RWPE1 (cell line): ENCODE measurements at regions of chr13 and their contacts with region 1.

Region 1: DNA sequence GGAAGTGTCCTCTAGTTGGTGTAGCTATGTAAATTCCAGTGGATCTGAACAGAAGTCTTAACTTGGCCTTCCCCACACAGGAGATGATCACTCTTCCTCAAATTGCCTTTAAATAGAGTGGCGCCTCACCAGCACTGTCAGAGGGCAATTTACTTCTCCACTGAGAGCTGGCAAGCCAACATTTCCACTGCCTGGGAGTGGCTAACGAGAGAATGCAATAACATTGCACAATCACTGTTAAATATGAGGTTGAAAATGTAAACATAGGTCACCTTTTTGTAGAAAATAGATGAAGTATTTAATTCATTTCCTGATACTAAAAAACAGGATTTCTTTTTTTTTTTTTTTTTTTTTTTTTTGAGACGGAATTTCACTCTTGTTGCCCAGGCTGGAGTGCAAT is 55.4 kb upstream of the UBL3 start:
- DNase-seq: peak; percentile 57
- H3K27ac ChIP-seq: peak overlapping the region; percentile 74
- CTCF ChIP-seq: no peak

Region 2: DNA sequence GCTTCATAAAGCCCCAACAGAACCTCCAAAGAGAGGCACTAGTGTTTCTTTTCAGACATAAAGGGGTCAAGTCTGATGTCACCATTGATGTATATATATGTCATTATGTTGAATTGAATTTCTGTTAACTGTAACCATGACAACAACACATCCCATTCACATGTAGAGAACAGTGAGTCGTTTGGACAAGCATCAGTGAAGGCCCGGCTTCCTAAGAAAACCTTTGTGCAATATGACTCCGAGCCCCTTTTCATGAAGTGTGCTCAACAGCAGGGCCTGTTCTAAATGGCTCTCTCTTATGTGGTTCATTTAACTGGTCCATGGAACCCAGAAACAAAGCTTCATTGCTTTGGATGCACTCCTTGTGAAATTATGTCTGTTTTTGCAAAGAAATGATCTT is 11.8 kb after region 1 on chr13:
- CTCF ChIA-PET with region 1: no interaction called
- POLR2A ChIA-PET with region 1: no interaction called
- DNase-seq: no peak
- H3K27ac ChIP-seq: no peak overlapping the region
- CTCF ChIP-seq: no peak

Region 3: GRCh38 chr13:30319655-30320054 is 413.8 kb after region 1 on chr13:
- CTCF ChIA-PET with region 1: no interaction called
- POLR2A ChIA-PET with region 1: no interaction called
- DNase-seq: no peak
- H3K27ac ChIP-seq: no peak overlapping the region
- CTCF ChIP-seq: no peak

Region 4: GRCh38 chr13:31321457-31321856 is 1415.6 kb after region 1 on chr13:
- CTCF ChIA-PET with region 1: interaction called, 10 read pairs
- POLR2A ChIA-PET with region 1: no interaction called
- DNase-seq: no peak
- H3K27ac ChIP-seq: no peak overlapping the region
- CTCF ChIP-seq: no peak